ENCODE measurements at regions of chr12 and their contacts with region 1.

Region 1: DNA sequence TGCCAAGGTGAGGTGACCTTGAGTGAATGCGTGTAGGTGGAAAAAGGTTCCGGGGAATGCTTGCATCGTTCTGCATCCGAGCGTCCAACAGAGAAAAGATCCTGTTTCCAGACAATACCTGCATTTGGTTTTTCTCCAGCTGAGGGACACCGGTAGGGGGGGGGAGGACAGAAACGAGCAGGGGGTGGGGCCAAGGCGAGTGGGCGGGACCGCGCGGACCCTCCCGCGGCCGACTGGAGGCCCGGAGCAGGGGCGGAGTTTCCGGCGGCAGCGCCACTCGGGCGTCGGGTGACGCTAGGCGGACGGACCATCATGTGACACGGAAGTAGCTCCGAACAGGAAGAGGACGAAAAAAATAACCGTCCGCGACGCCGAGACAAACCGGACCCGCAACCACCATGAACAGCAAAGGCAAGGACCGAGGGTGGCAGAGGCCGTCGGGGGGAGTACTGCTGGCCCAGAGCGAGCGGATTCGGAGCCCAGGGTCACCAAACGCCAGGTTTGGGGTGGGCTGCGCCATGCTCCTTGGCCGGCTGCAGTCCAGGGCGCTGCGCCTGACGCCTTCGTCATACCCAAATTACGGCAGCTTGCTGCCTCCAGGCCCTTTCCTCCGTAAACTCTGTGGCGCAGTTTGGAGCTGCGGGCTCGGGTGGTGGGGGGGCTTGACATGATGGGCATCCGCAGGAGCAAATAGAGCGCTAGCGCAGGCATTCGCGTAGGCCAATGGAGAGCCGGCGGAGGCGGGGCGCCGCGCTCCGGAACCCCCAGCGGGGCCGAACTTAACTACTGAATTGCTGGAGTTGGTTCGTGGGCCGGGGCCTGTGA is at the start of gene DAZAP2:
- DNase-seq: peak; percentile 96 to 97
- ATAC-seq: peak; percentile 98 to 99 (median 99)
- H3K4me3 ChIP-seq: peak within 1 kb of the TSS; percentile 68 to 100 (median 92)
- H3K27ac ChIP-seq: peak within 1 kb of the TSS; percentile 96 to 100 (median 100)
- H3K4me1 ChIP-seq: peaks cover 8 to 47% (median 21%) of the 10 kb centered on the region in 9 donors
- H3K27me3 ChIP-seq: no peaks in the 10 kb centered on the region
- CTCF ChIP-seq: peak in 6 of 9 donors; percentile 6 to 54 (median 37)
- total RNA-seq, gene DAZAP2: 140 to 185 (median 165) TPM

Region 2: GRCh38 chr12:51083126-51083833 is 155.4 kb before region 1 on chr12 and contains the start of gene CSRNP2:
- intact Hi-C with region 1: loop called in 3 of 10 experiments (anchors 10 kb)
- DNase-seq: peak; percentile 96
- ATAC-seq: peak; percentile 99 to 100 (median 100)
- H3K4me3 ChIP-seq: peak within 1 kb of the TSS; percentile 70 to 98 (median 90)
- H3K27ac ChIP-seq: peak within 1 kb of the TSS; percentile 64 to 98 (median 96)
- H3K4me1 ChIP-seq: peaks cover 0 to 33% (median 21%) of the 10 kb centered on the region in 9 donors
- H3K27me3 ChIP-seq: no peaks in the 10 kb centered on the region
- CTCF ChIP-seq: peak in 3 of 9 donors; percentile 5 to 36 (median 18)
- total RNA-seq, gene CSRNP2: 13.7 to 25.3 (median 16.1) TPM

Measured in heart right ventricle (tissue), 16 donors.